ENCODE measurements at regions of chr7 and their contacts with region 1.

Region 1: DNA sequence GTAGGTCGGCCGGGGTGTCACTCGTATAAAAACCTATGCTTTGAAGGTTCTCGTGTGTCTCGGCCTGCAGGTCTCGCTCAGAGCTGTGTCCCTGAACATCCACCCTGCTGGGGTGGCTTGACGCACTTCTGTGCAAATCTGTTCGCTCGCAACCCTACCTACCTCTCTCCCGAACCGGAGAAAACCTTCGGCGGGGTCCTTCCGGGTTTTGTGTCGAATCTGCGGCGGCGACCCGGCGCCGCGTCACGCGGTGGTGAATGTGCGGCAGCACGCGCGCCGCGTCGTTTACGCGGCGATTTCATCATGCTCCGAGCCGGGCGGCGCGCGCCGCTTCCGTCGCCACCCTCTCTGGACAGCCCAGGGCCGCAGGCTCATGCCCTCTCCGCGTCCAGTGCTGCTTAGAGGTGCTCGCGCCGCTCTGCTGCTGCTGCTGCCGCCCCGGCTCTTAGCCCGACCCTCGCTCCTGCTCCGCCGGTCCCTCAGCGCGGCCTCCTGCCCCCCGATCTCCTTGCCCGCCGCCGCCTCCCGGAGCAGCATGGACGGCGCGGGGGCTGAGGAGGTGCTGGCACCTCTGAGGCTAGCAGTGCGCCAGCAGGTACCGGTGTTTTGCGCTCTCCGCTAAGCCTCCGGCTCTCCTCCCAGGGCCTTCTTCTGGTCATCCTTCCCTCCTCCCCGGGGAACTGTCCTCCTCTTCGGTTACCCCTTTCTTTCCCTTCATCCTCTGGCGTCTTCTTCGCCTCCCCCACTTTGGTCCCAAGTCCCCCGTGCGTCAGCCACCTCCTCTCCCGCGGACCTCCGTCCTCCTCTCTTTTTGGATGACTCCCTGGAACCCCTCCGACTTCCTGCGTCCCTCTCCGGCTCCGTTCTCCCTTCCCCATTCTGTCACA is at the start of gene GARS1:
- DNase-seq: peak; percentile 89
- ATAC-seq: peak; percentile 82
- H3K4me3 Mint-ChIP-seq: peak within 1 kb of the TSS; percentile 99
- H3K27ac Mint-ChIP-seq: peak within 1 kb of the TSS; percentile 99
- H3K4me1 Mint-ChIP-seq: peaks cover 55% of the 10 kb centered on the region
- H3K27me3 Mint-ChIP-seq: no peaks in the 10 kb centered on the region
- CTCF ChIP-seq: no peak
- total RNA-seq, gene GARS1: 197 and 214 TPM in 2 replicates

Region 2: GRCh38 chr7:29988424-29989256 is 606.2 kb before region 1 on chr7:
- CTCF ChIA-PET with region 1: no interaction called
- POLR2A ChIA-PET with region 1: no interaction called
- intact Hi-C with region 1: loop called (anchors 2 kb)
- DNase-seq: peak; percentile 60
- ATAC-seq: peak; percentile 27
- H3K4me3 Mint-ChIP-seq: peak overlapping the region; percentile 93
- H3K27ac Mint-ChIP-seq: peak overlapping the region; percentile 97
- H3K4me1 Mint-ChIP-seq: peaks cover 37% of the 10 kb centered on the region
- H3K27me3 Mint-ChIP-seq: no peaks in the 10 kb centered on the region
- CTCF ChIP-seq: no peak

Region 3: GRCh38 chr7:30026229-30027064 is 568.3 kb before region 1 on chr7 and contains the start of gene FKBP14:
- CTCF ChIA-PET with region 1: no interaction called
- POLR2A ChIA-PET with region 1: interaction called, 4 read pairs
- intact Hi-C with region 1: loop called (anchors 1 kb)
- DNase-seq: peak; percentile 72
- ATAC-seq: peak; percentile 76
- H3K4me3 Mint-ChIP-seq: no peak within 1 kb of the TSS
- H3K27ac Mint-ChIP-seq: peak within 1 kb of the TSS; percentile 91
- H3K4me1 Mint-ChIP-seq: peaks cover 38% of the 10 kb centered on the region
- H3K27me3 Mint-ChIP-seq: no peaks in the 10 kb centered on the region
- CTCF ChIP-seq: no peak
- total RNA-seq, gene FKBP14: 7.7 and 11.4 TPM in 2 replicates

Region 4: DNA sequence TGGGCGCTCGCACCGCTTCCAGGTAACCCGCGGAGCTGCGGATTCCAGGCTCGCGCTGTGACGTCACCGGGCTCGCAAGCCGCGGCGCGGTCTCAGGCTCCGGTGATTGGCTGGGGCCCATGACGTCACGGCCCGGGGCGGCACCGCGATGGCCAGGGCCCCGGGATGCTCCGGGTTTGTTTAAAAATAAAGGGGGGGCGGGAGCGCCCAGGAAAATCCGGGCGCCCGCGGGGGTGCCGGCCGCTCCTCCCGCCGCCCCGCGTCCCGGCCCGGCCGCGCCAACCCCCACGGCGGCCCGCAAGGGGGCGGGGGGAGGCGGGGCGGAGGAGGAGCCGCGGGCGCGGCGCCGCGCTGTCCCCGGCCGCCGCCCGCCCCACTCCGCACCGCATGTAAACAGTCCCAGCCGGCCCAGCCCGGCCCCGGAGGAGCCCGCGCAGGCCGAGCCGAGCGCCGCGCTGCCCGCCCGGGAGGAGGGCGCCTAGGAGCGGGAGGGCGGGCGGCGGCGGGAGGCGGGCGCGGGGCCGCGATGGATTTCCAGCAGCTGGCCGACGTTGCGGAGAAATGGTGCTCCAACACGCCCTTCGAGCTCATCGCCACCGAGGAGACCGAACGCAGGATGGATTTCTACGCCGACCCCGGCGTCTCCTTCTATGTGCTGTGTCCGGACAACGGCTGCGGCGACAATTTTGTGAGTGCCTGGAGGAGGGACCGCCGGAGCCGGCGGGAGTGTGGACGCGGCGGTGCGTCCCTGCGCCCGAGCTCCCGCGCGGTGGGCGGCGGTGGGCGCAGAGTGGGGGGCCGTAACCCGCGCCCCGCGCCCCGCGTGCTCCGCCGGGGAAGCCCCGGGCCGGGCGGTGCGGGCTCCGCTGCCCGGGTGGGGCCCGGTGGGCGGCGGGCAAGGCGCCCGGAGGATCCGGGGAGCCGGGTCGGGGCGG is 459.9 kb before region 1 on chr7 and contains the start of gene MTURN:
- CTCF ChIA-PET with region 1: no interaction called
- POLR2A ChIA-PET with region 1: interaction called, 3 read pairs
- intact Hi-C with region 1: loop called (anchors 1 kb)
- DNase-seq: peak; percentile 85
- ATAC-seq: peak; percentile 82
- H3K4me3 Mint-ChIP-seq: peak within 1 kb of the TSS; percentile 91
- H3K27ac Mint-ChIP-seq: peak within 1 kb of the TSS; percentile 77
- H3K4me1 Mint-ChIP-seq: peaks cover 12% of the 10 kb centered on the region
- H3K27me3 Mint-ChIP-seq: peaks cover 11% of the 10 kb centered on the region
- CTCF ChIP-seq: no peak
- total RNA-seq, gene MTURN: 2.8 and 4.6 TPM in 2 replicates

Region 5: DNA sequence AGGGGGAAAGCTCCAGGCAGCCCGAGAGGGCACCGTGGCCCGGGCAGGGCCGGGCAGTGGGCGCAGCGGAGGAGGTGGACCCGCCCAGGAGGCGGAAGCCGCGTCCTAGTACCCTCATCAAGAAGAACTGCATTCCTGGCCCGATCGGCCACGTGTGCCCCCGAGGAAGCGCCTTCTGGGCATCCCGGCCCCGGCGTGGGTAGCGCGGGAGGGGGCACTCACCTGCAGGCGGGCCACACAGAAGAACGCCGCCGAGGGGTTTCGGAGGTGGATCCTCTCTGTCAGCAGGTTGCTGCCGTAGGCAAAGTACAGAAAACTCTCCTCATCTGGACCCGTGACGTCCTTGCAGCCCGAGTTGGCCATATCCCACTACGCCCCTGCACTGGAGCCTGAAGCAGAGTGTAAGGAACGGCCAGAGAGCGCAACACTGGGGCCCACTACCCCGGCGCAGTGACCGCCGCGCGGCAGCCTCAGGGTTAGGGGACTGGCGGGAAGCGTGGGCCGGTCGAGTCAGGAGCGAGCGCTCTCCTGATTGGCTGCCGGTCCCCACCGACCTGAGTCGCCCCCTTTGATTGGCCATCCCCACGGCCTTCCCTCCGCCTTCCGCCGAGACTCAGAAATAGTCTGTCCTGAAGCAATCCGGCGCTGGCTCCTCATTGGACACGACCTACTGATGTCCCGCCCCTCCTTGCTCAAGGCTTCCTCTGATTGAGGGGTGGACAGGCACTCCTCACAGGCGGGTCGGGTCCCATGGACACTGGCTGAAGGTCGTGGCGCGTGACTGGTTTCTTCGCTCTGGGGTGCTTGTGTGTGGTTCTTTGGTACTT is 90.2 kb before region 1 on chr7 and contains the start of gene GGCT:
- CTCF ChIA-PET with region 1: no interaction called
- POLR2A ChIA-PET with region 1: no interaction called
- intact Hi-C with region 1: loop called (anchors 1 kb)
- DNase-seq: peak; percentile 87
- ATAC-seq: peak; percentile 98
- H3K4me3 Mint-ChIP-seq: peak within 1 kb of the TSS; percentile 91
- H3K27ac Mint-ChIP-seq: peak within 1 kb of the TSS; percentile 97
- H3K4me1 Mint-ChIP-seq: peaks cover 39% of the 10 kb centered on the region
- H3K27me3 Mint-ChIP-seq: no peaks in the 10 kb centered on the region
- CTCF ChIP-seq: no peak
- total RNA-seq, gene GGCT: 22.7 and 24.4 TPM in 2 replicates

Region 6: DNA sequence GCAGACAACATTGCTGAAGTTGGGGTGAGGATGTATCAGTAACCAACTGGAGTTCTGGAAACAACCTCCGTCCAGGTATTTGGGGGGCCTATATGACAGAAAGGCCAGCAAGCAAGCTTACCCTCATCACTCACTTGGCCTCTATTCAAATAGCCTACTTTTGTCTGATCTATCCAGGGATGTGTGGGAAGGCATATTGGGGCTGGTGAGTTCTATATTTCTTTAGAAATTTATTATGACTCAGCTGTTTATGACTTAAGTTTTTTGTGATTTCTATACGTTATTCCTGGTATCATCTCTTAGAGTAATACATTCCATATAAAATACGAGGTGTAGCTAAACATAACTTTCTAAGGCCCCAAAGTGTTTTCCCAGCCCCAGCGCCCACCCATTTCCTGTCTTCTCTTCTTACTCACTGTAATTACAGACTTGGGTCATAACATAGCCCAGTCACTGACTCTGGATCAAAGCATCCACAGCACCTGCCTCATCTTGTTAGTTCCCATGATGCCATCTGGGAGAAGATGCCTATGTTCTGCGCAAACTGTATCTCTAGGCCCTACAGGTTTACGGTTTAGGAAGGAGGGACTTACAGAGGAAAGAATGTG is 18.0 kb after region 1 on chr7:
- CTCF ChIA-PET with region 1: no interaction called
- POLR2A ChIA-PET with region 1: no interaction called
- intact Hi-C with region 1: loop called (anchors 2 kb)
- DNase-seq: no peak
- ATAC-seq: no peak
- H3K4me3 Mint-ChIP-seq: no peak overlapping the region
- H3K27ac Mint-ChIP-seq: no peak overlapping the region
- H3K4me1 Mint-ChIP-seq: no peaks in the 10 kb centered on the region
- H3K27me3 Mint-ChIP-seq: no peaks in the 10 kb centered on the region
- CTCF ChIP-seq: no peak

Region 7: GRCh38 chr7:30740424-30741181 is 145.8 kb after region 1 on chr7:
- CTCF ChIA-PET with region 1: no interaction called
- POLR2A ChIA-PET with region 1: no interaction called
- intact Hi-C with region 1: loop called (anchors 2 kb)
- DNase-seq: peak; percentile 53
- ATAC-seq: peak; percentile 57
- H3K4me3 Mint-ChIP-seq: no peak overlapping the region
- H3K27ac Mint-ChIP-seq: no peak overlapping the region
- H3K4me1 Mint-ChIP-seq: peaks cover 2% of the 10 kb centered on the region
- H3K27me3 Mint-ChIP-seq: peaks cover 4% of the 10 kb centered on the region
- CTCF ChIP-seq: peak; percentile 94

Measured in activated B cell treated with CpG ODN at 0.5 μM for 24 hours (primary cell).